ENCODE measurements at regions of chr1 and their contacts with region 1.

Region 1: DNA sequence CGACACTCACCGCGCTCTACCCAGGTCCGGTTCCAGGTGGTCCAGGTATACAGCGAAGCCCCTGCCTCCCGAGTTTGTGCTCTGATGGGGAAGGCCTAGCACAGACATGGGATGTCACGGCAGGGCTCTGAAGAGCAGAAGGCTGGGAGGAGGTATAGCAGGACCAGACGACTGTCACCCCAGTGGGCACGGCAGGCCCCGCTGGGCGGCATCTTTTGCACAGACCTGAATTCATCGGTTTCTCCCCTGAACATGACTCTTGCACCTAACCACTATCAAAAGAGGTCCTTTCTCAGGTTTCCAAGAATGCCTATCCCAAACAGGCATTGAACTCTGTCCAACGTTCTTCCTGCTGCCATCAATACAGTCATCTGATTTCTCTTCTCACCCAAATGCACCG is 30.6 kb downstream of the ARHGEF16 start:
- DNase-seq: no peak
- H3K4me3 ChIP-seq: no peak overlapping the region
- H3K27ac ChIP-seq: no peak overlapping the region
- H3K4me1 ChIP-seq: no peaks in the 10 kb centered on the region
- H3K27me3 ChIP-seq: peaks cover 11% of the 10 kb centered on the region
- CTCF ChIP-seq: no peak
- POLR2A ChIP-seq: no peak

Region 2: GRCh38 chr1:3384407-3384806 is 100.6 kb before region 1 on chr1:
- intact Hi-C with region 1: no loop called
- DNase-seq: no peak
- H3K4me3 ChIP-seq: no peak overlapping the region
- H3K27ac ChIP-seq: no peak overlapping the region
- H3K4me1 ChIP-seq: no peaks in the 10 kb centered on the region
- H3K27me3 ChIP-seq: peaks cover 12% of the 10 kb centered on the region
- CTCF ChIP-seq: no peak
- POLR2A ChIP-seq: no peak

Region 3: DNA sequence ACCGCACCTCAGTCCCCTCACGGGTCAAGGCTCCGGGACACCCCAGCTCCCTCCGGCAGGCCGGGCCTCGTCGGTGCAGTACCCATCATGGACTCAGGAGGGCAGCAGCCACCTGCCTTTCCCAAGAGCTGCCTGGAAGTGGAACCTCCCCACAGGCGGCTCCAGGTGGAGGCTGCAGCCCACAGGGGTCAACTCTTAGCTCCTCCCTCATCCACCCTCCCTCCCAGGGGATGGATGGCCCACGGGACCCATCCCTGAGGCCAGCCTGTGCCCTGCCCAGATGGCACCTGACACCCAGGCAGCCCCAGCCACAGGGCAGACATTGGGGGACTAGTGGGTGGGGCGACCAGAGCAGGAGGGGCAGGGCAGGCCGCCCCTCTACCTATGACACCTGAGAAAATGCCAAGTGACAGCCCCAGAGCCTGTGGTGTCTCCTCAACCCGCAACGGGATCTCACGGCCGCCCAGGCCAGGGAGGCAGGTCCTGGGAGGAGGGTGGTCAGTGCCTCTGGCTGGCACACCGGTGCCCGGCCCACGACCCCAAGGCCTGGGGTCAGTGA is 31.7 kb before region 1 on chr1:
- intact Hi-C with region 1: loop called in 1 of 2 experiments (anchors 5 kb)
- DNase-seq: peak; percentile 46 to 84 (median 73)
- H3K4me3 ChIP-seq: no peak overlapping the region
- H3K27ac ChIP-seq: no peak overlapping the region
- H3K4me1 ChIP-seq: peaks cover 6 to 10% of the 10 kb centered on the region in 2 donors
- H3K27me3 ChIP-seq: peaks cover 27% of the 10 kb centered on the region
- CTCF ChIP-seq: peak; percentile 83 to 93 (median 89)
- POLR2A ChIP-seq: no peak